Tibial artery (tissue), 4 donors: ENCODE measurements at regions of chr4 and their contacts with region 1.

Region 1: GRCh38 chr4:149441338-149441737 is 374.3 kb downstream of the IQCM start:
- DNase-seq: no peak
- H3K4me3 ChIP-seq: no peak overlapping the region
- H3K27ac ChIP-seq: no peak overlapping the region
- H3K4me1 ChIP-seq: no peaks in the 10 kb centered on the region
- H3K27me3 ChIP-seq: no peaks in the 10 kb centered on the region
- CTCF ChIP-seq: no peak

Region 2: GRCh38 chr4:148914301-148914700 is 527.0 kb before region 1 on chr4:
- intact Hi-C with region 1: no loop called
- DNase-seq: no peak
- H3K4me3 ChIP-seq: no peak overlapping the region
- H3K27ac ChIP-seq: no peak overlapping the region
- H3K4me1 ChIP-seq: no peaks in the 10 kb centered on the region
- H3K27me3 ChIP-seq: no peaks in the 10 kb centered on the region
- CTCF ChIP-seq: no peak

Region 3: DNA sequence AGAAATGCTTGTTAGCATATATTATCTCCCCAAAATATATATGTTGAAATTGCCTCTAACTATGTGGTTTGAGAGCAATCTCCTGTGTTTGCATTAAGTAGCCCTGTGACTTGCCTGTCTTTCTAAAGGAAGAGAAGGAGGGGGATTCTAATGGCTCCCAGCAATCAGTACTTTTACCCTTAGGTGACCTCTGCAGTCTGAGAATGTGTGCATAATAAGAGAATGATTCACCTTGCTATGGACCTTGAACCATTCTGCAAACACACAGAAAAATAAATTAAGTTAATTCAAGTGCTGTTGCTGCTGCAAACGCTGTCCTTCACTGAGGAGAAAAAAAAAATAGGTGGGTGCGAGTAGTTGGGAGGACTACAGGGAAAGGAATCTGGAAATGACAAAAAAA is 52.2 kb after region 1 on chr4:
- intact Hi-C with region 1: no loop called
- DNase-seq: no peak
- H3K4me3 ChIP-seq: no peak overlapping the region
- H3K27ac ChIP-seq: no peak overlapping the region
- H3K4me1 ChIP-seq: no peaks in the 10 kb centered on the region
- H3K27me3 ChIP-seq: no peaks in the 10 kb centered on the region
- CTCF ChIP-seq: no peak

Region 4: DNA sequence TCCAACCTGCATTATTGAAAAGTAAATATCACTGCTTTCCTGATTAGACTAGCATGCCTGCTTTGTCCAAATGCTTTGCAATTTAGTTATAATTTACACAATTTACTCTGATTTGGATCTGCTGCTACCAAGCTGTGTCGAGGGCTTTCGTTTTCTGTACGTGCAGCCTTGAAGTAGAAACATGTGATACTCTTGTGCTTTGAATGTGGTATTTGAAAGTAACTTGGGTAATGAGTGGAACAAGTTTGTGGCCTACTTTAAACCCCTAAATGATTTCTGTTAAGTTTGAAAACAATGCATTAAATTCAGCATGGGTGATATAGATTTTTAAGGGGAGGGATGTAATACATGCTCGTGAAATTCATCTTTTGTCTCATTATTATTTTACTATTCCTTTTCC is 133.6 kb after region 1 on chr4:
- intact Hi-C with region 1: no loop called
- DNase-seq: no peak
- H3K4me3 ChIP-seq: no peak overlapping the region
- H3K27ac ChIP-seq: no peak overlapping the region
- H3K4me1 ChIP-seq: no peaks in the 10 kb centered on the region
- H3K27me3 ChIP-seq: no peaks in the 10 kb centered on the region
- CTCF ChIP-seq: no peak

Region 5: DNA sequence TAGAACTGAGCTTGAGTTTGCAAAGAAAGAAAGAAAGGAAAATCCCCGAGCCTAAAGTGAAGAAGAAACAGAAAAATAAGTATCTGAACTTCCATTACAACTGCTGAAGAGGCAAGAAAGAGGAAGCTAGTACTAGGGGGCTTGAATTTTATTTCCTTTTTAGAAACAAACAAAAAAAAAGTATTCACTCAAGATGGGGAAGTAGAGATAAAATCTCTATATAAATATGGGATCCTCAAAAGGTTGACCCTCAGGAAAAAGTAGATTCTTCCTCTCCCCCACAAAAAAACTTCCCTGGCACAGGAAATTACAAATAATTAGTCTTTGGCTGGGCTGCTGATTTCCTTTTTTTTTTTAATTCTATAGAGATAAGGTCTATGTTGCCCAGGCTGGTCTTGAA is 1557.7 kb after region 1 on chr4:
- intact Hi-C with region 1: no loop called
- DNase-seq: no peak
- H3K4me3 ChIP-seq: no peak overlapping the region
- H3K27ac ChIP-seq: no peak overlapping the region
- H3K4me1 ChIP-seq: no peaks in the 10 kb centered on the region
- H3K27me3 ChIP-seq: no peaks in the 10 kb centered on the region
- CTCF ChIP-seq: no peak

Region 6: DNA sequence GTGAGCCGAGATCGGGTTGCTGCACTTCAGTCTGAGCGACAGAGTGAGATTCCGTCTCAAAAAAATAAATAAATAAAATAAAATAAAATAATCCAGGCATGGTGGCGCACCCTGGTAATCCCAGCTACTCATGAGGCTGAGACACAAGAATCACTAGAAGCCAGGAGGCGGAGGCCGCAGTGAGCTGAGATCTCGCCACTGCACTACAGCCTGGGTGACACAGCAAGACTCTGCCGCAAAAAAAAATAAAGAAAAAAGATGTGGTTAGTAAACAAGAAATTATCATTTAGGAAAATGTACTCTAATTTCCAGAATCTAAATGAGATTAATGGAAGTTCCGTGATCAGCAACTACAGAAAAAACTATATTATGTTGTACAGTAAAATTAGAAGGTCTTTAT is 1588.2 kb after region 1 on chr4:
- intact Hi-C with region 1: loop called (anchors 5 kb)
- DNase-seq: no peak
- H3K4me3 ChIP-seq: no peak overlapping the region
- H3K27ac ChIP-seq: no peak overlapping the region
- H3K4me1 ChIP-seq: no peaks in the 10 kb centered on the region
- H3K27me3 ChIP-seq: no peaks in the 10 kb centered on the region
- CTCF ChIP-seq: no peak